CD8-positive, alpha-beta T cell (primary cell): ENCODE measurements at regions of chr5 and their contacts with region 1.

Region 1: DNA sequence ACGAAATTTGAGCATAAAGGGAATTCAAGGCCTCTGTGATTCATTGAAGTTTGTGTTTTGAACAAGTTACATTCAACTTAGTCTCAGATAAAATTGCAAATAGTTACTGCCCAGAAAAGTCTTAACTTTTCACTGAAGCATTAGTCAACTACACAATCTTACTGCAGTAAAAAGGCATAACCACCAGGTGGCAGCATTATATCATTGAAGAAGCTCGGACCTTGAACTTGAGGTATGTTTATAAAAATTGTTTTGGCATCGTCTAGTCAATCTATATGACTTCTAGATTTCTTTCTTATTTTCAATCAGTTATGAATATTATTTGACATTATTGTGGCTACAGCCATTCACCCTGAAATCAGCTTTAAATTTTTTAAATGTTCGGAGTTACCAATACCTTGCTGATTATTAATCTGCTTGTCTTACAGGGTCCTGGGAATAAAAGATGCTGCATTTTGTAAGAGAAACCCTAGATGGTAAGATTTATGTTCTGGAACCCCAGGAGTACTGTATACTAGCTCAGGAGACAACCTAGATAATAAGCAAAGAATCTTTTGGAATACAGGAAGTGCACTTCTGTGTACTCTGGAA is 83.9 kb upstream of the GRAMD2B start:
- DNase-seq: peak in 8 of 9 experiments; percentile 24 to 73 (median 46)
- ATAC-seq: peak; percentile 68
- H3K4me3 ChIP-seq: no peak overlapping the region
- H3K4me3 Mint-ChIP-seq: no peak overlapping the region
- H3K27ac ChIP-seq: no peak overlapping the region
- H3K27ac Mint-ChIP-seq: no peak overlapping the region
- H3K4me1 ChIP-seq: no peaks in the 10 kb centered on the region
- H3K4me1 Mint-ChIP-seq: no peaks in the 10 kb centered on the region
- H3K27me3 ChIP-seq: no peaks in the 10 kb centered on the region
- H3K27me3 Mint-ChIP-seq: peaks cover 10% of the 10 kb centered on the region
- CTCF ChIP-seq: peak; percentile 92

Region 2: GRCh38 chr5:126373375-126374108 is 34.2 kb after region 1 on chr5:
- CTCF ChIA-PET with region 1: no interaction called
- POLR2A ChIA-PET with region 1: no interaction called
- intact Hi-C with region 1: no loop called
- DNase-seq: peak in 4 of 9 experiments; percentile 7 to 64 (median 39)
- ATAC-seq: peak; percentile 90
- H3K4me3 ChIP-seq: no peak overlapping the region
- H3K4me3 Mint-ChIP-seq: peak overlapping the region; percentile 3
- H3K27ac ChIP-seq: peak overlapping the region in 1 of 2 experiments; percentile 36
- H3K27ac Mint-ChIP-seq: peak overlapping the region; percentile 83
- H3K4me1 ChIP-seq: peaks cover 14% of the 10 kb centered on the region
- H3K4me1 Mint-ChIP-seq: peaks cover 20% of the 10 kb centered on the region
- H3K27me3 ChIP-seq: no peaks in the 10 kb centered on the region
- H3K27me3 Mint-ChIP-seq: no peaks in the 10 kb centered on the region
- CTCF ChIP-seq: no peak

Region 3: GRCh38 chr5:126499853-126500342 is 160.6 kb after region 1 on chr5:
- CTCF ChIA-PET with region 1: interaction called, 12 read pairs
- POLR2A ChIA-PET with region 1: no interaction called
- intact Hi-C with region 1: no loop called
- DNase-seq: peak in 5 of 9 experiments; percentile 20 to 73 (median 34)
- ATAC-seq: peak; percentile 82
- H3K4me3 ChIP-seq: no peak overlapping the region
- H3K4me3 Mint-ChIP-seq: peak overlapping the region; percentile 6
- H3K27ac ChIP-seq: no peak overlapping the region
- H3K27ac Mint-ChIP-seq: peak overlapping the region; percentile 84
- H3K4me1 ChIP-seq: peaks cover 13% of the 10 kb centered on the region
- H3K4me1 Mint-ChIP-seq: peaks cover 35% of the 10 kb centered on the region
- H3K27me3 ChIP-seq: no peaks in the 10 kb centered on the region
- H3K27me3 Mint-ChIP-seq: no peaks in the 10 kb centered on the region
- CTCF ChIP-seq: peak; percentile 60

Region 4: DNA sequence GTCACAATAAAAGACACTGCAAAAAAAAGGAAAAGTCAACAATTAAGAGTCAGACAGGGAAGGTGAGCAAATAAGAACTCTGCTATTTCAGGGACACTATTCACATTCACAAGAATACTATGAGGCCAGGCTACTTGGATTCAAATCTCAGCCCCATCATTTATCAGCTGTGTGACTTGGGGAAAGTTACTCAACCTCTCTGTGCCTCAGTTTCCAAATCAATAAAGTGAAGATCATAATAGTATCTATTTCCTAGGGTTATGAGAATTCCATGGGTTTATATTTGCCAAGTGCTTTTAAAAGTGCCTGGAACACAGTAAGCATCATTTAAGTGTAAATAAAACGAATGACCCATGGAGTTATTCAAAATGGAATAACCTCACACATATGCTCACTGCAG is 199.3 kb after region 1 on chr5:
- CTCF ChIA-PET with region 1: interaction called, 125 read pairs
- POLR2A ChIA-PET with region 1: interaction called, 3 read pairs
- intact Hi-C with region 1: loop called (anchors 1 kb)
- DNase-seq: no peak
- ATAC-seq: no peak
- H3K4me3 ChIP-seq: no peak overlapping the region
- H3K4me3 Mint-ChIP-seq: no peak overlapping the region
- H3K27ac ChIP-seq: no peak overlapping the region
- H3K27ac Mint-ChIP-seq: no peak overlapping the region
- H3K4me1 ChIP-seq: no peaks in the 10 kb centered on the region
- H3K4me1 Mint-ChIP-seq: peaks cover 2% of the 10 kb centered on the region
- H3K27me3 ChIP-seq: no peaks in the 10 kb centered on the region
- H3K27me3 Mint-ChIP-seq: no peaks in the 10 kb centered on the region
- CTCF ChIP-seq: no peak

Region 5: DNA sequence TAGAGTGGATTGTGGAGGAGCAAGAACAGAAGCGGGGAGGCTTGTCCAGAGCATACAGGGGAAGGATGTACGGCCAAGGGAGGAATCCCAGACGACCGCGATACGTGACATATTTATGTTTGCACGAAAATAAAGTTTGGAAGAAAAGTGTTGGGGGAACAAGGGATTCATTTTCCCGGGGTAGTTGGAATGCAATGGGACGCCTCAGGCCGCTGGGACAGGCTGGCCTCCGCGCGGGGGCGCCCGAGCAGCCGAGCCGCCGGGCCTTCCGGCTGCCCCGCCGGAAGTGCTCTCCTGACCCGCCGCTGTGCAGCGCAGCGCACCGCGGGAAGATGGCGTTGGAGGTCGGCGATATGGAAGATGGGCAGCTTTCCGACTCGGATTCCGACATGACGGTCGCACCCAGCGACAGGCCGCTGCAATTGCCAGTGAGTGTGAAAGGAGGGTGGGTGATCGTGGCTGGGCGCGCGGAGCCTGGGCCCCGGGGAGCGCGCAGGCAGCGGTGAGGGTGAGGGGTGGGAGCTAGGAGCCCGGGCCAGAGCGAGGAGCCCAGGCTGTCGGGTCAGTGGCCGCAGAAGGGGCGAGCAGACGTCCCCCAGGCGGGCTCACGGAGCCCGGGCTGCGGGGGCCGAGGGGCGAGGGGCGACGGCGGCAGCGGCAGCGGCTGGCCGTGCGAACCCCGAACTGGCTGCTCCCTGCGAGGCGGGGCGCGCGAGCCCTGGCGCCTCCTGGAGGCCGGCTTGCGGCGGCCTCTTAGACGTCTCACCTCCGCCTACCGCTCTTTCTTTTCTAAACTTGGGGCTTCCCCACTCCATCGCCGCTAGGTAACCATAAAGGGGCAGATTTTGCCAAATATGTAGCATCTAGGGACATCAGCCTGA is 261.6 kb after region 1 on chr5 and contains the start of gene PHAX:
- CTCF ChIA-PET with region 1: interaction called, 14 read pairs
- POLR2A ChIA-PET with region 1: interaction called, 3 read pairs
- intact Hi-C with region 1: loop called (anchors 1 to 2 kb)
- DNase-seq: peak; percentile 47 to 87 (median 70)
- ATAC-seq: peak; percentile 94
- H3K4me3 ChIP-seq: peak within 1 kb of the TSS; percentile 88 to 98
- H3K4me3 Mint-ChIP-seq: peak within 1 kb of the TSS; percentile 98
- H3K27ac ChIP-seq: peak within 1 kb of the TSS; percentile 83 to 85
- H3K27ac Mint-ChIP-seq: peak within 1 kb of the TSS; percentile 96
- H3K4me1 ChIP-seq: peaks cover 29% of the 10 kb centered on the region
- H3K4me1 Mint-ChIP-seq: peaks cover 33% of the 10 kb centered on the region
- H3K27me3 ChIP-seq: no peaks in the 10 kb centered on the region
- H3K27me3 Mint-ChIP-seq: no peaks in the 10 kb centered on the region
- CTCF ChIP-seq: peak; percentile 66
- total RNA-seq, gene PHAX: 29.4 to 32.8 TPM

Region 6: DNA sequence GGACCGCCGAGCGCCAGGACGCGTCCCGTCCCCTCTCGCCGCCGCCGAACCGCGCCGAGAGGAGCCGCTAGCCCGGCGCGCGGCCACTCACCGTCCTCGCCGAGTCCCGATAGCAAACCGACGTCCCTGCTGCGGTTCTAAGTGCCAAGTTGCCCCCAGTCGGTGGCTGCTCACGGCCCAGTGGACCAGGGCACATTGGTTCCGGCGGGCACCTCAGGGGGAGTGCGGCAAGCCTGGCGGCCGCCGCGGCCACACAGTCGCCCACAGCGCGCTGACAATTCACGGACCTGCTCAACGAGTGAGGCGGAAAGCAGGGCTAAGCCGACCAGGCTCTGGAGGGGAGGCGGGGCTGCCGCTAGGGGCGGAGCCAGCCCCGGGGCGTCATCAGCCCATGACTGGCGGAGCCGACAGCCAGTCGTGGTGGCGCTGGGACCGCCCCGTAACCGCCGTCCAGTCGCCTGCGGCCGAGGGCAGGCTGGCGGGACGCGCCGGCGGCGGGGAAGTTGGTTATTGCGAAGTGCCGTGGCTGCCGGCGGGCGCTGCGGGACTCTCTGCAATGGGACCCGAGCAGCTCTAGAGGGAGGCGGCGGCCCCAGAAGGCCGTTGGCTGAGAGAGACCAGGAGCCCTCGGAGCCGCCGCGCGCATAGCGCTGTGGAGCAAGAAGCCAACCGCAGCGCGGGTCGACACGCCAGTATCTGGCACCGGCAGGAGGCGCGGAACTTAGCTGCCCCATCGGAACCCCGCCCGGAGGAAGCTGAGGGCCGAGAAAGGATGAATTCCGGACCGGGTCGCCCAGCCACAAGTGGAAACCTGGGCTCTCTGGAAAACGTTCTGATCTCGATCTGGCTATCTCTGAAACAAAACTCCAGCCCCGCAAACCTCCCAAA is 691.2 kb after region 1 on chr5 and contains the start of gene MARCHF3:
- CTCF ChIA-PET with region 1: no interaction called
- POLR2A ChIA-PET with region 1: no interaction called
- intact Hi-C with region 1: no loop called
- DNase-seq: peak; percentile 86 to 96 (median 92)
- ATAC-seq: peak; percentile 95
- H3K4me3 ChIP-seq: peak within 1 kb of the TSS; percentile 81 to 87
- H3K4me3 Mint-ChIP-seq: peak within 1 kb of the TSS; percentile 93
- H3K27ac ChIP-seq: peak within 1 kb of the TSS; percentile 49 to 54
- H3K27ac Mint-ChIP-seq: peak within 1 kb of the TSS; percentile 64
- H3K4me1 ChIP-seq: peaks cover 8% of the 10 kb centered on the region
- H3K4me1 Mint-ChIP-seq: peaks cover 25% of the 10 kb centered on the region
- H3K27me3 ChIP-seq: no peaks in the 10 kb centered on the region
- H3K27me3 Mint-ChIP-seq: peaks cover 7% of the 10 kb centered on the region
- CTCF ChIP-seq: no peak
- total RNA-seq, gene MARCHF3: 7.7 to 9.7 TPM

Region 7: GRCh38 chr5:127492854-127493738 is 1153.8 kb after region 1 on chr5:
- CTCF ChIA-PET with region 1: no interaction called
- POLR2A ChIA-PET with region 1: no interaction called
- intact Hi-C with region 1: loop called (anchors 5 to 10 kb)
- DNase-seq: peak in 2 of 9 experiments; percentile 40 to 54
- ATAC-seq: peak; percentile 71
- H3K4me3 ChIP-seq: no peak overlapping the region
- H3K4me3 Mint-ChIP-seq: no peak overlapping the region
- H3K27ac ChIP-seq: no peak overlapping the region
- H3K27ac Mint-ChIP-seq: no peak overlapping the region
- H3K4me1 ChIP-seq: no peaks in the 10 kb centered on the region
- H3K4me1 Mint-ChIP-seq: no peaks in the 10 kb centered on the region
- H3K27me3 ChIP-seq: no peaks in the 10 kb centered on the region
- H3K27me3 Mint-ChIP-seq: peaks cover 27% of the 10 kb centered on the region
- CTCF ChIP-seq: peak; percentile 94